Colonic mucosa (tissue), 4 donors: ENCODE measurements at regions of chr22 and their contacts with region 1.

Region 1: GRCh38 chr22:41146573-41146972 is 54.2 kb downstream of the EP300 start:
- DNase-seq: no peak
- H3K4me3 ChIP-seq: no peak overlapping the region
- H3K27ac ChIP-seq: no peak overlapping the region
- H3K4me1 ChIP-seq: no peaks in the 10 kb centered on the region
- H3K27me3 ChIP-seq: no peaks in the 10 kb centered on the region
- CTCF ChIP-seq: no peak

Region 2: GRCh38 chr22:40844951-40845350 is 301.6 kb before region 1 on chr22:
- intact Hi-C with region 1: loop called (anchors 10 kb)
- DNase-seq: no peak
- H3K4me3 ChIP-seq: no peak overlapping the region
- H3K27ac ChIP-seq: no peak overlapping the region
- H3K4me1 ChIP-seq: no peaks in the 10 kb centered on the region
- H3K27me3 ChIP-seq: no peaks in the 10 kb centered on the region
- CTCF ChIP-seq: no peak

Region 3: DNA sequence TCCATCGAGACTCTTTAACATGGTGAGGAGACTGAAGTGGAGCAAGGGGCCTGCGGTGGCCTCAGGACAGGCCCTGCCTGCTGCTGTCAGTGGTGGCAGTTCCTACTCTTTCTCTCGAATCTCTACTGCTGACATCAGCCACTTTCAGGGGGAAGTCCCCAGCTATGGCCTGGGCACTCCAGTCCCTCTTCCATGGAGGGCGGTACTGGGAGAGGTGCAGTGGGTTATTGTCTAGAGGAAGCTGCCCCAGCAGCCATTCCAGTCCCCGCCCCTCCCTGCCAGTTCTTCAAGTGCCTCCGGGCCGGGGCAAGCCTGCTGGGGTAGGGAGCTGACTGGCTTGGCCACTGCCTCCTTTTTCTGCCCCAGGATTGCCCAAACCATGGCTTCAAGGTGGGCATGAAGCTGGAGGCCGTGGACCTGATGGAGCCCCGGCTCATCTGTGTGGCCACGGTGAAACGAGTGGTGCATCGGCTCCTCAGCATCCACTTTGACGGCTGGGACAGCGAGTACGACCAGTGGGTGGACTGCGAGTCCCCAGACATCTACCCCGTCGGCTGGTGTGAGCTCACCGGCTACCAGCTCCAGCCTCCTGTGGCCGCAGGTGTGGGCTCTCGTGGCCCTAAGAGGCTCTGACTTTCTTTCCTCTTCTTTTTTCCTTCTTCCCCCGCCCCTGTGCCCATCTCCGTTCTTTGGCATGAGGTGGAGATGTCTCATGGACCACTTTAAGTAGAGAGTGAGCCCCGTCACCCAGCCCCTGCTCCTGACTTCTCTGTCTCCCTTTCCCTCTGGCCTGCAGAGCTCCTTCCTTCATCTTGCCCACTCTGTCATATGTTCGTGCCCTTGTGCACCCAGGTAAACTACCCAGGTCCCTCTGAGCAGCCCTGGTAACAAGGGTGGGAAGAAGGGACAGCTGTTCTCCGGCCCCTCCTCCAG is 80.4 kb after region 1 on chr22:
- intact Hi-C with region 1: no loop called
- DNase-seq: no peak
- H3K4me3 ChIP-seq: no peak overlapping the region
- H3K27ac ChIP-seq: no peak overlapping the region
- H3K4me1 ChIP-seq: no peaks in the 10 kb centered on the region
- H3K27me3 ChIP-seq: no peaks in the 10 kb centered on the region
- CTCF ChIP-seq: no peak

Region 4: DNA sequence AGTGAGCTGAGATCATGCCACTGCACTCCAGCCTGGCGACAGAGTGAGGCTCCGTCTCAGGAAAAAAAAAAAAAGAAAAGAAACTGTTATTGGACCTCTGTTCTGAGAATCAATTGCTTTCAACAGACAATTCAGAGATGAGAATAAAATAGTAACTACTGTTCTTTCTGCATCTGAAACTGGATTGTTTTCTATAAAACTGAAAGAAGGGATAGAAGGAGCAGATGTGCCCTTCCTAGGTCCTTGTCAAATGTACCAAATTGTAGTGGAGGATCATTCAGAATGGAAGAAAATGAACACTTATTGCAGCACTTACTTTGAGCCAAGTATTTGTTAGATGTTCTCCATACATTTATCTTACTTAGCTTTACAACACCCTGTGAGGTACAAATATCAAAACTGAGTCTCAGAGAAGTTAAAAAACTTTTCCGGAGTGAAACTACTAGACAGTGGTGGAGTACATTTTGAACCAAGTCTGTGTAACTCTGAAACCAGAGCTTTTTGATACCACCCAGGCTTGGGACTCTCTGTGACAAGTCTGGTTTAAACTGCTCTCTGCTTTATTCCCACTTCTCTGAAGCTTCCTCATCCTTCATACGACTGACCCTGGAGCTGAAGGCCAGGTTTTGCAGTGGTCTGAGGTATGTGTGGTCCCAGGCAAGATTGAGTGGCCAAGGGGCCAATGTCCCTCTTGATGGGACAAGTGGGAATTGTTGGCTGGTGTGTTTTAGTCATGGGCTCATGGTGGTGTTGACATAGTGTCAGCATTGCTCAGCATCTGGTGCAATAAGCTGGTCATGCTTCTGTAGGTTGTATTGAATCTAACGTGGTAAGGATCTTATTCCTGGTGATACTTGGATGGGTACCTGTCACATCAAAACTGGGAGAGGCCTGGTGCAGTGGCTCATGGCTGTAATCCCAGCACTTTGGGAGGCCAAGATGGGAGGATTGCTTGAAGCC is 605.7 kb after region 1 on chr22:
- intact Hi-C with region 1: no loop called
- DNase-seq: no peak
- H3K4me3 ChIP-seq: no peak overlapping the region
- H3K27ac ChIP-seq: no peak overlapping the region
- H3K4me1 ChIP-seq: no peaks in the 10 kb centered on the region
- H3K27me3 ChIP-seq: no peaks in the 10 kb centered on the region
- CTCF ChIP-seq: no peak